A673 (cell line): ENCODE measurements at regions of chr16 and their contacts with region 1.

Region 1: DNA sequence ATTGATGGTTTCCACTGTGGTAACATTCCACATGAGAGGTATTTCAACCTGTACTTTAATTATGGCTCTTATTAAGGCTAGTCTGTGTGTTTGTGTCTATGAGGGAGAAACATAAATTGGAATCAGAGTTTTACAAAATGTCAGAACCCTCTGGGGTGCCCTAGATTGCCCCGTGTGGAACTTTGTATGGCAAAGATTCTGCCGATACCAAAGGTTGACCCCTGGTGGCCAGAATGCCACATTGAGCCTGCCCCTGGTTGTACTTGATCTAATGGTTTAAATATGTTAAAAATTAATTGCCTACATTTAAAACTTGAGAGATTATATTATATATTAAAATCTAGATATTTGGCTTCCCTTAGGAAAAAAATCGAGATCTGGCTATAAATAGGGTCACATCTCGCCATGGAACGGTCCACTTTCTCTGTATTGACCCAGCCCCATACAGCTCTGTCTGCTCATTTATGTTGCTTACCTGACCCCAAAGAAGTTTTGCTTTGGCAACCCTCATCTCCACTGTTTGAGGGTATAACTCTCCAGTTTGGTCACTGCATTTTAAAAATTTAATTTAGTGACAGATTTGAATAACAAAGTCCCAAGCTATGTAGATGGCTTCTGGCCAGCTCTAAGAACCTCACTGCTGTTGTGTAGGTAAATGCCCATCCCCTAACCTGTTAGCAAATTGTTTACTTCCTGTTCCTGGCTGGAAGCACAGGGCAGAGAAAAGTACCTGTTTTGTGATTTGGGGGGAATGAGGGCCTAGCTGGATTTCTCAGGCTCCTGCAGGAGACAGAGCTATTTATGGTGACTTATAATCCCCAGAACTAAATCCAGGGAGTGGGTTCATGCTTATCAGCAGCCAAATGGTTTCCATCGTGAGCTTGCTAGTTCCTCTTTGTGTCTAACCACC is 95.0 kb downstream of the PLCG2 start:
- DNase-seq: peak; percentile 62
- H3K4me3 ChIP-seq: no peak overlapping the region
- H3K27ac ChIP-seq: no peak overlapping the region
- H3K4me1 ChIP-seq: no peaks in the 10 kb centered on the region
- H3K27me3 ChIP-seq: no peaks in the 10 kb centered on the region
- CTCF ChIP-seq: peak; percentile 79

Region 2: GRCh38 chr16:81366316-81366932 is 507.7 kb before region 1 on chr16:
- CTCF ChIA-PET with region 1: no interaction called
- POLR2A ChIA-PET with region 1: no interaction called
- intact Hi-C with region 1: loop called (anchors 10 kb)
- DNase-seq: peak; percentile 60
- H3K4me3 ChIP-seq: no peak overlapping the region
- H3K27ac ChIP-seq: no peak overlapping the region
- H3K4me1 ChIP-seq: no peaks in the 10 kb centered on the region
- H3K27me3 ChIP-seq: no peaks in the 10 kb centered on the region
- CTCF ChIP-seq: peak; percentile 75

Region 3: DNA sequence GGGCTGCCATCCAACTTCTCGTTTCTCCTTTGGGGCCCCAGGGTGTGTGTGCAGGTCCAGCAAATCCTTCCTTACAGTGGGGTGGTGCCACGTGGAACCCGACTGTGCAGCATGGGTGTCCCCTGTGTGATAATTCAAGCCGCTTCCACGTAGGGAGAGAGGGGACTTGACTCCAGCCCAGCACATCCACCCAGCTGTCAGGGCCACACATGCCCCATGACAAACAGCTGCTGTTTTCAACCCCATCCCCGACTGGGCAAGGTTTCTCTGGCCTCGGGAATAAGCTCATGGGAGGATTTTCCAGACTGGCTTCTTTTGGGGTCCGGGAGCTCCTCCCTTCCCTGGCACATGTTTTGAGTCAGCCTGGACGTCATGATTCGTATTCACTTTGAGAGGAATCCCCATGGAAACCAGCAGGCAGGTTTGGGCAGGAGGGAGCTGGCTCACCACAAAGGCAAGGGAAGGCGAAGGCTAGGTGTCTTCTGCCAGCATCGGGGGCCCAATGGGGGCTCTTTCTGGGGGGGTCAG is 273.1 kb before region 1 on chr16:
- CTCF ChIA-PET with region 1: no interaction called
- POLR2A ChIA-PET with region 1: no interaction called
- intact Hi-C with region 1: no loop called
- DNase-seq: no peak
- H3K4me3 ChIP-seq: no peak overlapping the region
- H3K27ac ChIP-seq: no peak overlapping the region
- H3K4me1 ChIP-seq: no peaks in the 10 kb centered on the region
- H3K27me3 ChIP-seq: no peaks in the 10 kb centered on the region
- CTCF ChIP-seq: no peak

Region 4: GRCh38 chr16:81623363-81624102 is 250.6 kb before region 1 on chr16:
- CTCF ChIA-PET with region 1: no interaction called
- POLR2A ChIA-PET with region 1: no interaction called
- intact Hi-C with region 1: loop called (anchors 10 kb)
- DNase-seq: peak; percentile 60
- H3K4me3 ChIP-seq: no peak overlapping the region
- H3K27ac ChIP-seq: no peak overlapping the region
- H3K4me1 ChIP-seq: no peaks in the 10 kb centered on the region
- H3K27me3 ChIP-seq: no peaks in the 10 kb centered on the region
- CTCF ChIP-seq: peak; percentile 68

Region 5: GRCh38 chr16:81821436-81822128 is 52.5 kb before region 1 on chr16:
- CTCF ChIA-PET with region 1: no interaction called
- POLR2A ChIA-PET with region 1: no interaction called
- intact Hi-C with region 1: no loop called
- DNase-seq: no peak
- H3K4me3 ChIP-seq: no peak overlapping the region
- H3K27ac ChIP-seq: no peak overlapping the region
- H3K4me1 ChIP-seq: no peaks in the 10 kb centered on the region
- H3K27me3 ChIP-seq: no peaks in the 10 kb centered on the region
- CTCF ChIP-seq: no peak